ENCODE measurements at regions of chr15 and their contacts with region 1.

Region 1: GRCh38 chr15:62964251-62964650 is 78.3 kb upstream of the TPM1 start:
- DNase-seq: no peak
- H3K4me3 ChIP-seq: no peak overlapping the region
- H3K27ac ChIP-seq: no peak overlapping the region
- H3K4me1 ChIP-seq: no peaks in the 10 kb centered on the region
- H3K27me3 ChIP-seq: no peaks in the 10 kb centered on the region
- CTCF ChIP-seq: no peak
- EP300 ChIP-seq: no peak
- POLR2A ChIP-seq: no peak

Region 2: GRCh38 chr15:62920682-62921502 is 43.4 kb before region 1 on chr15:
- in situ Hi-C with region 1: no loop called
- intact Hi-C with region 1: loop called (anchors 1 kb)
- DNase-seq: no peak
- H3K4me3 ChIP-seq: no peak overlapping the region
- H3K27ac ChIP-seq: peak overlapping the region; percentile 26 to 57 (median 38)
- H3K4me1 ChIP-seq: peaks cover 0 to 21% (median 0%) of the 10 kb centered on the region in 4 donors
- H3K27me3 ChIP-seq: no peaks in the 10 kb centered on the region
- CTCF ChIP-seq: no peak
- EP300 ChIP-seq: no peak
- POLR2A ChIP-seq: no peak

Region 3: GRCh38 chr15:63104727-63105126 is 140.5 kb after region 1 on chr15:
- in situ Hi-C with region 1: no loop called
- intact Hi-C with region 1: no loop called
- DNase-seq: no peak
- H3K4me3 ChIP-seq: no peak overlapping the region
- H3K27ac ChIP-seq: no peak overlapping the region
- H3K4me1 ChIP-seq: peaks cover 4 to 13% (median 9%) of the 10 kb centered on the region in 4 donors
- H3K27me3 ChIP-seq: no peaks in the 10 kb centered on the region
- CTCF ChIP-seq: no peak
- EP300 ChIP-seq: no peak
- POLR2A ChIP-seq: no peak